CD4-positive, alpha-beta T cell (primary cell): ENCODE measurements at regions of chr3 and their contacts with region 1.

Region 1: GRCh38 chr3:152241142-152242017 is 27.3 kb upstream of the MBNL1 start:
- DNase-seq: peak in 3 of 14 experiments; percentile 41 to 66 (median 45)
- ATAC-seq: no peak
- H3K4me3 ChIP-seq: no peak overlapping the region
- H3K4me3 Mint-ChIP-seq: peak overlapping the region; percentile 92
- H3K27ac ChIP-seq: peak overlapping the region; percentile 68 to 76
- H3K27ac Mint-ChIP-seq: peak overlapping the region; percentile 79
- H3K4me1 ChIP-seq: peaks cover 23% of the 10 kb centered on the region
- H3K4me1 Mint-ChIP-seq: peaks cover 78% of the 10 kb centered on the region
- H3K27me3 ChIP-seq: no peaks in the 10 kb centered on the region
- H3K27me3 Mint-ChIP-seq: no peaks in the 10 kb centered on the region
- CTCF ChIP-seq: no peak

Region 2: DNA sequence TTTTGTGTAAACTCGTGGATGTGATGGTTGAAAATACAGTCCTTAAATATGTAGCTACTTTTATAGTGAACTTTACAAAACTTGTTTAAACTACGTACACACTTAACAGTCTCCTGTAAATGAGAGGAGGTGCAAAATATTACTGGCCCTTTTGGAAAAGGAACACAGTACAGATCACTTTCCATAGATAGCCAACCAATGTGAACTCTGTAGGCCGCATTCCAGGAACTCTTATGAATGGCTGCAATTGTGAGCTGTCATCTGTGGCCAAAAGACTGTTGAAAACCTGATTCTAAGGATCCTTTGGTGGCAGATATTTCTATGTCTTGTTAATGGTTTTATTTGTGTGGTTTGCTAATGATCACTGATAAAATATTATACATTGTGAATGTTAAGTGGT is 1827.1 kb before region 1 on chr3:
- CTCF ChIA-PET with region 1: no interaction called
- POLR2A ChIA-PET with region 1: no interaction called
- intact Hi-C with region 1: no loop called
- DNase-seq: no peak
- ATAC-seq: no peak
- H3K4me3 ChIP-seq: no peak overlapping the region
- H3K4me3 Mint-ChIP-seq: peak overlapping the region; percentile 52
- H3K27ac ChIP-seq: no peak overlapping the region
- H3K27ac Mint-ChIP-seq: no peak overlapping the region
- H3K4me1 ChIP-seq: peaks cover 11% of the 10 kb centered on the region
- H3K4me1 Mint-ChIP-seq: peaks cover 77% of the 10 kb centered on the region
- H3K27me3 ChIP-seq: no peaks in the 10 kb centered on the region
- H3K27me3 Mint-ChIP-seq: no peaks in the 10 kb centered on the region
- CTCF ChIP-seq: no peak

Region 3: GRCh38 chr3:150737874-150738713 is 1503.3 kb before region 1 on chr3:
- CTCF ChIA-PET with region 1: no interaction called
- POLR2A ChIA-PET with region 1: no interaction called
- intact Hi-C with region 1: no loop called
- DNase-seq: no peak
- ATAC-seq: no peak
- H3K4me3 ChIP-seq: no peak overlapping the region
- H3K4me3 Mint-ChIP-seq: no peak overlapping the region
- H3K27ac ChIP-seq: no peak overlapping the region
- H3K27ac Mint-ChIP-seq: no peak overlapping the region
- H3K4me1 ChIP-seq: peaks cover 17% of the 10 kb centered on the region
- H3K4me1 Mint-ChIP-seq: peaks cover 58% of the 10 kb centered on the region
- H3K27me3 ChIP-seq: no peaks in the 10 kb centered on the region
- H3K27me3 Mint-ChIP-seq: no peaks in the 10 kb centered on the region
- CTCF ChIP-seq: no peak

Region 4: GRCh38 chr3:152183473-152183872 is 57.9 kb before region 1 on chr3:
- CTCF ChIA-PET with region 1: interaction called, 10 read pairs
- POLR2A ChIA-PET with region 1: interaction called, 16 read pairs
- intact Hi-C with region 1: no loop called
- DNase-seq: peak in 13 of 14 experiments; percentile 31 to 80 (median 39)
- ATAC-seq: peak; percentile 91
- H3K4me3 ChIP-seq: no peak overlapping the region
- H3K4me3 Mint-ChIP-seq: peak overlapping the region; percentile 45
- H3K27ac ChIP-seq: no peak overlapping the region
- H3K27ac Mint-ChIP-seq: peak overlapping the region; percentile 6
- H3K4me1 ChIP-seq: peaks cover 11% of the 10 kb centered on the region
- H3K4me1 Mint-ChIP-seq: peaks cover 63% of the 10 kb centered on the region
- H3K27me3 ChIP-seq: no peaks in the 10 kb centered on the region
- H3K27me3 Mint-ChIP-seq: no peaks in the 10 kb centered on the region
- CTCF ChIP-seq: peak; percentile 86

Region 5: GRCh38 chr3:152199102-152199840 is 42.1 kb before region 1 on chr3:
- CTCF ChIA-PET with region 1: interaction called, 10 read pairs
- POLR2A ChIA-PET with region 1: interaction called, 132 read pairs
- intact Hi-C with region 1: loop called in 1 of 2 experiments (anchors 2 kb)
- DNase-seq: peak in 3 of 14 experiments; percentile 54 to 67 (median 64)
- ATAC-seq: peak; percentile 38
- H3K4me3 ChIP-seq: peak overlapping the region; percentile 43
- H3K4me3 Mint-ChIP-seq: peak overlapping the region; percentile 80
- H3K27ac ChIP-seq: peak overlapping the region; percentile 62 to 81
- H3K27ac Mint-ChIP-seq: peak overlapping the region; percentile 96
- H3K4me1 ChIP-seq: peaks cover 25% of the 10 kb centered on the region
- H3K4me1 Mint-ChIP-seq: peaks cover 86% of the 10 kb centered on the region
- H3K27me3 ChIP-seq: no peaks in the 10 kb centered on the region
- H3K27me3 Mint-ChIP-seq: no peaks in the 10 kb centered on the region
- CTCF ChIP-seq: no peak

Region 6: DNA sequence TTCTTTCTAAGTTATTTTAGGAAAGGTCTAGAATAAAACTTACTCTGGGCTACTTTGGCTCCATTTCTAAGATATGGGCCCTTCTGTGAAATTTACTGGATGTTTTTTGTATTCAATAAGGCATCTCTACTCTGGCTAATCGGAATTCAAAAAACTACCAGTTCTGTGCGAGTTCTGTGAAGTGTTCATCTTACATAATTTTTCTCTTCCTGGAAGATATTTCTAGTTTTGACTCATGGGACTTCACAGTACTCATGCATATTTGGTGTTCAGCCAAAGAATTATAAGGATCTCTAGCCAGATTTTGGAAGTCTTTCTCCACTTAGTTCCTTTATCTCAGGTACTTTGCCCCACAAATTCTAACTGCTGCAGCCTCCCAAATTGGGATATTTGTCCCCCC is 19.1 kb before region 1 on chr3:
- CTCF ChIA-PET with region 1: interaction called, 4 read pairs
- POLR2A ChIA-PET with region 1: interaction called, 12 read pairs
- intact Hi-C with region 1: loop called (anchors 2 kb)
- DNase-seq: no peak
- ATAC-seq: peak; percentile 51
- H3K4me3 ChIP-seq: no peak overlapping the region
- H3K4me3 Mint-ChIP-seq: peak overlapping the region; percentile 77
- H3K27ac ChIP-seq: no peak overlapping the region
- H3K27ac Mint-ChIP-seq: peak overlapping the region; percentile 83
- H3K4me1 ChIP-seq: peaks cover 14% of the 10 kb centered on the region
- H3K4me1 Mint-ChIP-seq: peaks cover 69% of the 10 kb centered on the region
- H3K27me3 ChIP-seq: no peaks in the 10 kb centered on the region
- H3K27me3 Mint-ChIP-seq: no peaks in the 10 kb centered on the region
- CTCF ChIP-seq: no peak

Region 7: GRCh38 chr3:152258448-152259393 is 17.3 kb after region 1 on chr3:
- CTCF ChIA-PET with region 1: interaction called, 16 read pairs
- POLR2A ChIA-PET with region 1: interaction called, 118 read pairs
- intact Hi-C with region 1: loop called in 1 of 2 experiments (anchors 1 kb)
- DNase-seq: peak in 12 of 14 experiments; percentile 35 to 90 (median 58)
- ATAC-seq: peak; percentile 65
- H3K4me3 ChIP-seq: peak overlapping the region; percentile 19
- H3K4me3 Mint-ChIP-seq: peak overlapping the region; percentile 86
- H3K27ac ChIP-seq: peak overlapping the region; percentile 81 to 86
- H3K27ac Mint-ChIP-seq: peak overlapping the region; percentile 96
- H3K4me1 ChIP-seq: peaks cover 57% of the 10 kb centered on the region
- H3K4me1 Mint-ChIP-seq: peaks cover 96% of the 10 kb centered on the region
- H3K27me3 ChIP-seq: no peaks in the 10 kb centered on the region
- H3K27me3 Mint-ChIP-seq: no peaks in the 10 kb centered on the region
- CTCF ChIP-seq: no peak